Activated CD4-positive, alpha-beta memory T cell treated with anti-CD3 and anti-CD28 coated beads for 36 hours (primary cell): ENCODE measurements at regions of chr2 and their contacts with region 1.

Region 1: GRCh38 chr2:143177096-143177786 is 48.0 kb downstream of the ARHGAP15 start:
- DNase-seq: no peak
- H3K4me3 Mint-ChIP-seq: peak overlapping the region; percentile 70
- H3K27ac Mint-ChIP-seq: peak overlapping the region; percentile 82
- H3K4me1 Mint-ChIP-seq: peaks cover 53% of the 10 kb centered on the region
- H3K27me3 Mint-ChIP-seq: no peaks in the 10 kb centered on the region

Region 2: DNA sequence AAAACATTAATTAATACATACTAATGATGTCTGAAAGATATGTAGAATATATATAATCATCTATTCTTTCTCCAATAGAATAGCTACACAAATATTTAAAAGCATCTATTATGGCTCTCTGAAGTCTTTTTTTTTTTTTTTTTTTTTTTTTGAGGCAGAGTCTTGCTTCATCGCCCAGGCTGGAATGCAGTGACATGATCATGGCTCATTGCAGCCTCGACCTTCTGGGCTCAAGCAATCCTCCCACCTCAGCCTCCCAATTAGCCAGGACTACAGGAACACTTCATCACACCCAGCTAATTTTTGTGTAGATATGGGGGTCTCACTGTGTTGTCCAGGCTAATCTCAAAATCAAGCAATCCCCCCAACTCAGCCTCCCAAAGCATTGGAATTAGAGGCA is 420.1 kb before region 1 on chr2:
- CTCF ChIA-PET with region 1: no interaction called
- POLR2A ChIA-PET with region 1: no interaction called
- intact Hi-C with region 1: no loop called
- DNase-seq: no peak
- H3K4me3 Mint-ChIP-seq: no peak overlapping the region
- H3K27ac Mint-ChIP-seq: no peak overlapping the region
- H3K4me1 Mint-ChIP-seq: no peaks in the 10 kb centered on the region
- H3K27me3 Mint-ChIP-seq: no peaks in the 10 kb centered on the region

Region 3: GRCh38 chr2:143058851-143059250 is 118.4 kb before region 1 on chr2:
- CTCF ChIA-PET with region 1: no interaction called
- POLR2A ChIA-PET with region 1: no interaction called
- intact Hi-C with region 1: no loop called
- DNase-seq: no peak
- H3K4me3 Mint-ChIP-seq: no peak overlapping the region
- H3K27ac Mint-ChIP-seq: no peak overlapping the region
- H3K4me1 Mint-ChIP-seq: no peaks in the 10 kb centered on the region
- H3K27me3 Mint-ChIP-seq: peaks cover 1% of the 10 kb centered on the region

Region 4: GRCh38 chr2:143195511-143195910 is 18.3 kb after region 1 on chr2:
- CTCF ChIA-PET with region 1: no interaction called
- POLR2A ChIA-PET with region 1: no interaction called
- intact Hi-C with region 1: loop called (anchors 2 kb)
- DNase-seq: no peak
- H3K4me3 Mint-ChIP-seq: no peak overlapping the region
- H3K27ac Mint-ChIP-seq: no peak overlapping the region
- H3K4me1 Mint-ChIP-seq: peaks cover 34% of the 10 kb centered on the region
- H3K27me3 Mint-ChIP-seq: no peaks in the 10 kb centered on the region